ENCODE measurements at regions of chr11 and their contacts with region 1.

Region 1: DNA sequence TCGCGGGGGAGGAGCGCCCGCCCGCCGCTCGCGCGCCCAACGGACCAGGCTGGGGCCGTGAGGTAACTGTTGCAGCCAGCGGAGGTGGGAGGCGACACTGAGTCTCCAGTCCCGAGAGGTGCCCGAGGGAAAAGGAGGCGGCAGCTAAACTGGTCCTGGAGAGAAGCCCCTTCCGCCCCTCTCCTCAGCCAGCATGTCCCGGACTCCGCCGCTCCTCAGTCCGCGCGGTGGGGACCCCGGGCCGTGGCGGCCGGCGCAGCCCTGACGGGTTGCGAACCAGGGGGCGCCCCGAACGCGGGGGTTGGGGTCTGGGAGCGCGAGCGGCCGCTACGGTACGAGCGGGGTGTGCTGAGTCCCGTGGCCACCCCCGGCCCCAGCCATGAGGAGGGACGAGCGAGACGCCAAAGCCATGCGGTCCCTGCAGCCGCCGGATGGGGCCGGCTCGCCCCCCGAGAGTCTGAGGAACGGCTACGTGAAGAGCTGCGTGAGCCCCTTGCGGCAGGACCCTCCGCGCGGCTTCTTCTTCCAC is at the start of gene PDE3B:
- DNase-seq: peak; percentile 85
- H3K4me3 Mint-ChIP-seq: peak within 1 kb of the TSS; percentile 92
- H3K27ac Mint-ChIP-seq: peak within 1 kb of the TSS; percentile 87
- H3K4me1 Mint-ChIP-seq: peaks cover 47% of the 10 kb centered on the region
- H3K27me3 Mint-ChIP-seq: no peaks in the 10 kb centered on the region
- total RNA-seq, gene PDE3B: 73.9 to 74.9 TPM

Region 2: DNA sequence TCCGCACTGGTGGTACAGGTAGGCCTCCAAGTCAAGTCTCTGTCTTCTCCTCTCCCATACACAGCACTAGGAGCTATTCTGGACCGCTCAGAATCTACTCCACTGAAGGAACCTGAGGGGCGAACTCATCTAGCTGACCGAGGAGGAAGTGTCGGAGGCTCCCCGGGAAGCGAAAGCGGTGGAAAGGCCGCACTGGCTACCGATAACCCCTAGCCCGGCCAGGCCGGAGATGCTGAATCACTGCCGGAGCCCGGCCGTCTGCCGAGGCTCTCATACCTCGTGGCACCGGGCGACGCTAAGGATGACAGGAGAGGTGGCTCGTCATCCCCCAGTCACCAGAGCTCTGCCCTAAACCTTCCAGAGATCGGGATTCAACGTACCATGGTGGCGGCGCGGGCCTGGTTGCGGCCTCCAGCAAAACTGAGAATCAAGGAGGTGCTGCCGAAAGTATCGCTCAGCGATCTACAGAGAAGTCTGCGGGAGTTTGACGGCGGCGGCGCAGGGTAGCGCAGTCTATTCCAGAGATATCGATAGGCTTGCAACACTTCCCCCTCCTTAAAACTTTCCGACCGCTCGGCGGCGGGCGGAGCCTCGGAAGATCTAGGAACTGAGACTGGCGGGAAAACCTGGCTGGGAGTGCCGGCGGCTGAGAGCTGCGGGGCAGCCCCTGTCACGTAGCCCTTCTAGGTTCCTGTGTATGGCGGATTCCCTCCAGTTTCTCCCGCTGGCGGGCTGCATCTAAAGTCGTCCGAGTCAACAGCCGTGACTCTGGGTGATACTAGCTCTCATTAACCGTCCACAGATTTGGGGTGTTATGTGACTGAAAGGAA is 123.6 kb before region 1 on chr11 and contains the start of gene PSMA1:
- CTCF ChIA-PET with region 1: interaction called, 21 read pairs
- POLR2A ChIA-PET with region 1: interaction called, 78 read pairs
- DNase-seq: peak; percentile 95
- H3K4me3 Mint-ChIP-seq: peak within 1 kb of the TSS; percentile 92
- H3K27ac Mint-ChIP-seq: peak within 1 kb of the TSS; percentile 94
- H3K4me1 Mint-ChIP-seq: peaks cover 25% of the 10 kb centered on the region
- H3K27me3 Mint-ChIP-seq: no peaks in the 10 kb centered on the region
- total RNA-seq, gene PSMA1: 232 to 238 TPM

Region 3: GRCh38 chr11:14544611-14545010 is 99.2 kb before region 1 on chr11:
- CTCF ChIA-PET with region 1: interaction called, 45 read pairs
- POLR2A ChIA-PET with region 1: interaction called, 116 read pairs
- DNase-seq: no peak
- H3K4me3 Mint-ChIP-seq: no peak overlapping the region
- H3K27ac Mint-ChIP-seq: peak overlapping the region; percentile 79
- H3K4me1 Mint-ChIP-seq: peaks cover 37% of the 10 kb centered on the region
- H3K27me3 Mint-ChIP-seq: no peaks in the 10 kb centered on the region

Region 4: GRCh38 chr11:14578541-14578956 is 65.2 kb before region 1 on chr11:
- CTCF ChIA-PET with region 1: interaction called, 24 read pairs
- POLR2A ChIA-PET with region 1: interaction called, 143 read pairs
- DNase-seq: peak; percentile 74
- H3K4me3 Mint-ChIP-seq: peak overlapping the region; percentile 42
- H3K27ac Mint-ChIP-seq: peak overlapping the region; percentile 91
- H3K4me1 Mint-ChIP-seq: peaks cover 43% of the 10 kb centered on the region
- H3K27me3 Mint-ChIP-seq: no peaks in the 10 kb centered on the region

Region 5: GRCh38 chr11:14687943-14688627 is 44.3 kb after region 1 on chr11:
- CTCF ChIA-PET with region 1: no interaction called
- POLR2A ChIA-PET with region 1: no interaction called
- DNase-seq: no peak
- H3K4me3 Mint-ChIP-seq: no peak overlapping the region
- H3K27ac Mint-ChIP-seq: no peak overlapping the region
- H3K4me1 Mint-ChIP-seq: peaks cover 20% of the 10 kb centered on the region
- H3K27me3 Mint-ChIP-seq: no peaks in the 10 kb centered on the region

Region 6: DNA sequence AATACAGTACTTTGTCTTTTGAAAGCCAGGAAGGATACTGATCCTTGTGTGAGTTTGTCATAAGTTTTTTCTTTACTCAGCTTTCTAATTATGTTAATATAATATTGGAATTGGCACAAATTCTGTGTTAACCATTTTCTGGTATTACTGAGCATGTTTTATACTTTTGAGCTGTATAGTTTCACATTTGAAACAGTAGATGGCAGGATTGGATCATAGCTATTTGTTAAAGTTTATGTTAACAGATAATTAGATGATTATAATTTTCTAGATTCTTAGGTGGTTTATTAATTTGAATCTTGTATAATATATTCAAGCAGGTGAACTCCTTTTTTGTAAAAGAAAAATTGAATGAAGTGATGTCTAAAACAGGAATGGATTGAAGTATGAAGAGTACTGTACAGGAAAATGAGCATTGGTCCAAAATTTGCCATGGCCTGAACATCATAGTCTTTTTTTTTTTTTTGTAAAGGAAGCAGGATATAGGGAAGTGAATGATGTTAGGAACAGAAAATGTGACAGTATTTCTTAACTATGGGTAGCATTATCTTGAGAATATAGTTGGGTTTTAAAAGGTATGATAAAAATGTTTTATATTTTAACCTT is 146.2 kb after region 1 on chr11:
- CTCF ChIA-PET with region 1: interaction called, 10 read pairs
- POLR2A ChIA-PET with region 1: no interaction called
- DNase-seq: no peak
- H3K4me3 Mint-ChIP-seq: no peak overlapping the region
- H3K27ac Mint-ChIP-seq: no peak overlapping the region
- H3K4me1 Mint-ChIP-seq: peaks cover 2% of the 10 kb centered on the region
- H3K27me3 Mint-ChIP-seq: no peaks in the 10 kb centered on the region